WTC11 (cell line): ENCODE measurements at regions of chr17 and their contacts with region 1.

Region 1: DNA sequence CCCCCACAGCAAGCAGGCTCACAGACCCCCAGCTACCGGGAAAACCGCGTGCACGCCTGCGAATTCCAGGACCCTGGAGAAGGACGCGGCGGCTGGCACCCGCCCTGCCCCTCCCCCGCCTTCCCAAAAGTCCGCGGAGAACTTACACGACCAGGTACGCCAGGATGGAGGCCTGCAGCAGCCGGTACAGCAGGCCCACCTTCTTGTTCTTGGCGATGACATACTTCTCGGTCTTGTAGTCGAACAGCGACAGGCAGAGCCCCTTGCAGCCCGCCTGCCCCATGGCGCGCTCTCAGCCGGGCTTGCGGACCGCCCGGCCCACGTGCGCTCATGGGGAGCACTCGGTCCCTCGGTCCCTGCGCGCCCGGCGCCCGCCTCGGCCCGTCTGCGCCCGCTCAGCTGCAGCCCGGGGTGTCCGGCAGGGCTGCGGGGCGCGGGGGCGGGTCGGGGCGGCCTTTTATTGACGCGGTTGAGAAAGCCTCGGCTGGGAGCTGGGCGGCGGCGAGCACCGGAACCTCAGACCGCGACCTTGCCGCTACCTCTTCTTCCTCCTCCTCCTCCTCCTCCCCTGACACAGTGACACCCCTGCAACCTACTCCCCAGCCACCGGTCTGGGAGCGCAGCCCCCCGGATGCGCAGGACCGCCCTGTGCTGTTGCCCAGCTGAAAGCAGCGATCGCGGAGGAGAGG is at the start of gene P2RX5:
- DNase-seq: peak; percentile 58
- ATAC-seq: peak; percentile 24
- H3K4me3 Mint-ChIP-seq: peak within 1 kb of the TSS; percentile 75
- H3K27ac Mint-ChIP-seq: no peak within 1 kb of the TSS
- H3K4me1 Mint-ChIP-seq: peaks cover 10% of the 10 kb centered on the region
- H3K27me3 Mint-ChIP-seq: peaks cover 35% of the 10 kb centered on the region
- CTCF ChIP-seq: no peak
- total RNA-seq, gene P2RX5: 6.4 to 9.5 TPM (median 8.8 TPM) in 3 replicates

Region 2: GRCh38 chr17:3610523-3610922 is 85.3 kb before region 1 on chr17:
- CTCF ChIA-PET with region 1: no interaction called
- POLR2A ChIA-PET with region 1: no interaction called
- DNase-seq: no peak
- ATAC-seq: no peak
- H3K4me3 Mint-ChIP-seq: no peak overlapping the region
- H3K27ac Mint-ChIP-seq: no peak overlapping the region; the same call in 1 of the 2 replicates
- H3K4me1 Mint-ChIP-seq: no peaks in the 10 kb centered on the region
- H3K27me3 Mint-ChIP-seq: no peaks in the 10 kb centered on the region
- CTCF ChIP-seq: no peak

Region 3: GRCh38 chr17:3723556-3724369 is 27.9 kb after region 1 on chr17 and contains the start of gene HASPIN:
- CTCF ChIA-PET with region 1: interaction called, 14 read pairs
- POLR2A ChIA-PET with region 1: interaction called, 6 read pairs
- DNase-seq: peak; percentile 91
- ATAC-seq: peak; percentile 88
- H3K4me3 Mint-ChIP-seq: peak within 1 kb of the TSS; percentile 96
- H3K27ac Mint-ChIP-seq: peak within 1 kb of the TSS; percentile 85
- H3K4me1 Mint-ChIP-seq: peaks cover 29% of the 10 kb centered on the region
- H3K27me3 Mint-ChIP-seq: no peaks in the 10 kb centered on the region
- CTCF ChIP-seq: no peak
- total RNA-seq, gene HASPIN: 30.0 to 30.8 TPM (median 30.4 TPM) in 3 replicates

Region 4: DNA sequence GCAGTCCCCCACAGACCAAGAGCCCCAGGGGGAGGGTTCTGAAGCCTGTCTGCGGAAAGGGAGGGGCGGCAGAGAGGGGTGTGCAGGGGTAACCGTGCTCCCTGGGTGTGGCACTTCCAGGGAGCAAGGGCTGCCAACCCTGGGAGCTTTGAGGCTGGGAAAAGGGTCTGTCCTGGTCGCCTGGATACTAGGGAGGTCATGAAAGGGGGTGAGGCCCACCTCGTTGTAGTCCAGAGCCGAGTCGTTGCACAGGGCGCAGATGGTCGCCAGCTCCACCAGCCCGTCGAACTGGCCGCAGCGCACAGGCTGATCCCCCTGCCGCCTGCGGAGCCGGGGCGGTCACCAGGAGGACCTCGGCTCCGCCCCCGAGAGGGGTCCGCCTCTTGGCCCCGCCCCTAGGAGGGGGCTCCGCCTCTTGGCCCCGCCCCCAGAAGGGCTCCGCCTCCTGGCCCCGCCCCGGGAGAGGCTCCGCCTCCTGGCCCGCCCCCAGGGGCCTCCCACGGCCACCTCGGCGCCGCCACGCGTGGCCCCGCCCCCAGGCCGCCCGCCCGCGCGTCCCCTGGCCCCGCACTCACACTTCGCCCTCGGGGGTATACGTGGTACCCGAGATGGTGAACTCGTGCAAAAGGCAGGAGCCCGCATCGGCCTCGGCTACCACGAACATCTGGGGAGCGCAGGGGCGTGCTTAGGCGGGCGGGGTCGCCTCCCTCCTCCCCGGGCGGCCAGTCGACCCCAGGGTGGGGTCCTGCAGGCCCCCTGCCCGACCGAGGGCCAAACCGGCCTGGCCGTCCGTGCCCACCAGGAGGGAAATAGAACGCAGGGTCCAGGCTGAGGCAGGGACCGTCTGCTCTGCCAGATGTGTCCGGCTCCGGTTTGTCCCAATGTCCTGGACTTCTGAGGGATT is 248.9 kb after region 1 on chr17:
- CTCF ChIA-PET with region 1: no interaction called
- POLR2A ChIA-PET with region 1: no interaction called
- DNase-seq: peak; percentile 87
- ATAC-seq: peak; percentile 96
- H3K4me3 Mint-ChIP-seq: peak overlapping the region; percentile 61
- H3K27ac Mint-ChIP-seq: no peak overlapping the region; the same call in 1 of the 2 replicates
- H3K4me1 Mint-ChIP-seq: peaks cover 6% of the 10 kb centered on the region
- H3K27me3 Mint-ChIP-seq: no peaks in the 10 kb centered on the region
- CTCF ChIP-seq: no peak